ENCODE measurements at regions of chr15 and their contacts with region 1.

Region 1: GRCh38 chr15:99704444-99704838 is 28.8 kb downstream of the LYSMD4 start:
- DNase-seq: no peak
- ATAC-seq: peak; percentile 71 to 77
- H3K4me3 ChIP-seq: no peak overlapping the region
- H3K27ac ChIP-seq: no peak overlapping the region
- H3K4me1 ChIP-seq: peaks cover 12% of the 10 kb centered on the region
- H3K27me3 ChIP-seq: no peaks in the 10 kb centered on the region

Region 2: DNA sequence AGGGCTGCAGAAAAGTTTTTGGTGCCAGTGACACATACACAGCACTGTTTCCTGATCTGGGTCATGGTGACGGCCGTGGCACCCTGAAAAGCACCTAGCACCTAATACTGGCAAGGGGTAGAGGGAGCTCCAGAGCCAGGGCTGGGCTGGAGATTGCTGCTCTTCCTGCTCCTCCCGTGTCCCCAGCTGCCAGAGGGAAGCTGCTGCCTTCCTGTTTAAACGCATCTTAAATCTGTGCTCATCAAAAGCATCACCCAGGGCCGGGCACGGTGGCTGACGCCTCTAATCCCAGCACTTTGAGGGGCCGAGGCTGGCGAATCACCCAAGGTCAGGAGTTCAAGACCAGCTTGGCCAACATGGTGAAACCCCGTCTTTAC is 295.4 kb before region 1 on chr15:
- intact Hi-C with region 1: loop called in 1 of 4 experiments (anchors 5 kb)
- DNase-seq: peak; percentile 71 to 85 (median 84)
- ATAC-seq: peak; percentile 82 to 87
- H3K4me3 ChIP-seq: no peak overlapping the region
- H3K27ac ChIP-seq: no peak overlapping the region
- H3K4me1 ChIP-seq: peaks cover 10% of the 10 kb centered on the region
- H3K27me3 ChIP-seq: no peaks in the 10 kb centered on the region

Region 3: DNA sequence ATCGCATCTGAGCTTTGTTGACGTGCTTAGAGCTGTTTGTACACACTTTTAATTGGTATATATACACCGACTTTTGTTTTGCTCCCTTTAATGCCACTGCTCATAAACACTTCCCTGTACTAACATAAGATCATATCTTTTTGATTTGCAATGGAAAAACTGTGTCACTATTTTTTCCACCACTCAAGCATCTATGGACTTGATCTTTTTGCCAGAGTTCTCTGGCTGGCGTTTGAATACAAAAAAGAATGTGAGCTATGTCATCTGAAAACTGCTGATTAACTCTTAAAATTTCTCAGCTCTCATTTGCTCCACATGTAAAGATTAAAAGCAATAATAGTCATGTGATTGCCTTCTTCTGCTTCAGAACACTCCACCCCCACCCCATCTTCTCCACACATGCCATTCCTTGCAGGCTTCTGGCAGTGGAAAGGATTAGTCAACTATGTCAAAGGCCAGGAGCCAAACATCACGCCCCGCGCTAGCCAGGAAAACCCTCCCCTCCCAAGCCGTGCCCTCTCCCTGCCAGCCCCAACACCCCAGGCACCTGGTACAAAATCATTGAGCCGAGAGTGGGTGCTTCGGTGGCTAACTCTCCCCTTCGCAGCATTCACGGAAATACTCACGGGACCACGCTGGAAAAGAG is 262.1 kb before region 1 on chr15:
- intact Hi-C with region 1: loop called in 1 of 4 experiments (anchors 10 kb)
- DNase-seq: peak; percentile 77 to 90 (median 89)
- ATAC-seq: peak; percentile 88 to 93
- H3K4me3 ChIP-seq: no peak overlapping the region
- H3K27ac ChIP-seq: peak overlapping the region; percentile 93
- H3K4me1 ChIP-seq: peaks cover 20% of the 10 kb centered on the region
- H3K27me3 ChIP-seq: no peaks in the 10 kb centered on the region